BJ (cell line): ENCODE measurements at regions of chr17 and their contacts with region 1.

Region 1: GRCh38 chr17:38868817-38869525 is 887 bp upstream of the LASP1 start:
- DNase-seq: peak; percentile 58
- H3K4me3 ChIP-seq: peak overlapping the region; percentile 97
- H3K27me3 ChIP-seq: no peaks in the 10 kb centered on the region
- CTCF ChIP-seq: peak; percentile 38

Region 2: GRCh38 chr17:38958756-38959155 is 89.8 kb after region 1 on chr17:
- CTCF ChIA-PET with region 1: no interaction called
- POLR2A ChIA-PET with region 1: interaction called, 16 read pairs
- DNase-seq: peak; percentile 46
- H3K4me3 ChIP-seq: no peak overlapping the region
- H3K27me3 ChIP-seq: no peaks in the 10 kb centered on the region
- CTCF ChIP-seq: no peak

Region 3: DNA sequence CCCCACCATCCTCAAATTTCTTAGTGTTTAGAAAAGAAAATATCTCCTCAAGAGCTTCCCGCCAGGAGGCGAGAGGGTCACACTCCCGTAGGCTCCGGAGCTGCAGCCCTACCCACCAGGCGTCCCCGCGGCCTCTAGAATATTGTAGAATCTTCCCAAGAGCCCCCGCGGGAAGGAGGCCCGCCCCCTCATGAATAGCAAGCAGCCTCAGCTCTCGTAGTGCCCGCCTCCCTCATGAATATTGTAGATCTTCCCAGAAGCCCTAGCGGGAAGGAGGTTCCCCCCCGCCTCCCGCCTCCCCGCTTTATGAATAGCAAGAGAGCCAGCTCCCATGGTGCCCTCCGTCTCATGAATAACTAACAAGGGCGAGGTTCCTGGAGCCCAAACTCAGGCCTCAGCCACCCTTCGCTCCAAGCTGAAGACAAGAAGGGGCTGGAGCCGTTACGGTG is 98.3 kb after region 1 on chr17 and contains the start of gene FBXO47:
- CTCF ChIA-PET with region 1: no interaction called
- POLR2A ChIA-PET with region 1: interaction called, 13 read pairs
- DNase-seq: peak; percentile 58
- H3K4me3 ChIP-seq: peak within 1 kb of the TSS; percentile 27
- H3K27me3 ChIP-seq: no peaks in the 10 kb centered on the region
- CTCF ChIP-seq: peak; percentile 24; the same call in 1 of the 2 replicates
- polyA plus RNA-seq, gene FBXO47: not detected in 2 replicates